CD8-positive, alpha-beta memory T cell (primary cell): ENCODE measurements at regions of chr15 and their contacts with region 1.

Region 1: DNA sequence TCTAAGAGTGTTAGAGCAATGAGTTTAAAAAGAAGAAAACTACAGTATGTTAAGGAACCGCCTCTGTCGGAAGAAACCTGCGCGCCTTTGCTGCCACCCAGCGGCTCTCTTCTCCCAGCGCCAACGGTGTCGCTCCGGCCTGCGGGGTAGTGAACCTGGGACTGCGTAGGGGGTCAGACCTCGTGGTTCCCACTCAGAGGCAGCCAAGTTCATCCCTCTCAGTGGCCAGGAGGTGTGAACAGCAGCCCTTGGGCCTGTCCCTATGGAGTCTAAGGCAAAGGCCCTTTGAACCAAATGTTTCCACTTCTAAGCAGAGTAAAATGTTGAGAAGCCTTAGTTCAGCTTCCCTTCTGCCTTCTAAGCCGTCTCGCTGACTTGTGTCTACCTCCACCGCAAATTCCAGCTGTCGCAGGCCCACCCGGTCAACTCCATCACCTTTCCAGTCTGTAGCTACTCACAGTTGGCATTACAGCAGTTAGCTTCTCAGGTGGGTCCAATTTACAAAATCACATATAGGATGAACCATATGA is 980 bp upstream of the RAB27A start:
- DNase-seq: peak; percentile 75 to 90 (median 80)
- H3K4me3 ChIP-seq: peak overlapping the region; percentile 87
- H3K4me3 Mint-ChIP-seq: peak overlapping the region; percentile 92 to 99 (median 97)
- H3K27ac ChIP-seq: peak overlapping the region; percentile 91
- H3K27ac Mint-ChIP-seq: peak overlapping the region; percentile 94 to 99 (median 96)
- H3K4me1 ChIP-seq: peaks cover 16% of the 10 kb centered on the region
- H3K4me1 Mint-ChIP-seq: peaks cover 29 to 39% (median 39%) of the 10 kb centered on the region in 3 donors
- H3K27me3 ChIP-seq: no peaks in the 10 kb centered on the region
- H3K27me3 Mint-ChIP-seq: no peaks in the 10 kb centered on the region

Region 2: GRCh38 chr15:55239440-55240124 is 51.0 kb before region 1 on chr15:
- CTCF ChIA-PET with region 1: no interaction called
- POLR2A ChIA-PET with region 1: interaction called, 11 read pairs
- DNase-seq: no peak
- H3K4me3 ChIP-seq: no peak overlapping the region
- H3K4me3 Mint-ChIP-seq: peak overlapping the region in 3 of 7 donors; percentile 7 to 71 (median 20)
- H3K27ac ChIP-seq: peak overlapping the region; percentile 5
- H3K27ac Mint-ChIP-seq: peak overlapping the region; percentile 4 to 87 (median 44)
- H3K4me1 ChIP-seq: peaks cover 20% of the 10 kb centered on the region
- H3K4me1 Mint-ChIP-seq: peaks cover 55 to 91% (median 88%) of the 10 kb centered on the region in 3 donors
- H3K27me3 ChIP-seq: no peaks in the 10 kb centered on the region
- H3K27me3 Mint-ChIP-seq: no peaks in the 10 kb centered on the region